ENCODE measurements at regions of chrX and their contacts with region 1.

Region 1: GRCh38 chrX:53374222-53374820 is 48.1 kb downstream of the SMC1A start:
- DNase-seq: no peak

Region 2: GRCh38 chrX:54710920-54711319 is 1336.6 kb after region 1 on chrX:
- intact Hi-C with region 1: loop called in 1 of 2 experiments (anchors 5 kb)
- DNase-seq: no peak